ENCODE measurements at regions of chrX and their contacts with region 1.

Region 1: GRCh38 chrX:4547213-4547836 is 833.9 kb upstream of the PRKX start:
- DNase-seq: peak in 1 of 2 donors; percentile 28
- ATAC-seq: no peak

Region 2: GRCh38 chrX:5113128-5113527 is 565.8 kb after region 1 on chrX:
- intact Hi-C with region 1: loop called in 1 of 2 experiments (anchors 10 kb)
- DNase-seq: no peak
- ATAC-seq: no peak